HepG2 (cell line): ENCODE measurements at regions of chr18 and their contacts with region 1.

Region 1: DNA sequence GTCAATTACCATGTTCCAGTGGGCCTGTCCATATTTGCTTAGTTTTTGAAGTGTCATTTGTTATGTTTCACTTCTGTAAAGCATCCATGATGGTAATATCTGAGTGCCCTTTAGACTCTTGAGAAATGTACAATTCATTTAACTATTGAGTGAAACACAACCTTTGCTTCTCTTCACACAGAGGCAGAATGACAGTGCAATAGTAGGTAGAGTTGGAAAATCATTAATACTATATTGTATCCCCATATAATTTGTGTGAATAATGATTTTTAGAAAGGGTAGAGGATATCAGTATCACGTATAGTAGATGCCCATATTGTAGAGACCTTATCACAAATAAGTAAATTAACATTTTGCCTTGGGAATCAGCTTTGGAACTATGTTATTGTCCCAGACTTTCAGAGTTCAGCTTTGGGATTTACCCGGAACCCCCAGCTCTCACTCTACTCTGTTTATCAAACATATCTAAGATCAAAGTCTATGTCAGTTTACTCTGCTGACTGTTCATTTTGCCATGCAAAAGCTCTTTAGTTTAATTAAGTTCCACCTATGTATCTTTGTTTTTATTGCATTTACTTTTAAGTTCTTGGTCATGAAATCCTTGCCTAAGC is 172.7 kb upstream of the NOL4 start:
- DNase-seq: peak; percentile 70
- ATAC-seq: peak; percentile 96
- H3K4me3 ChIP-seq: peak overlapping the region in 1 of 3 experiments; percentile 11; a peak in 2 of 6 replicates
- H3K27ac ChIP-seq: peak overlapping the region; percentile 77
- H3K4me1 ChIP-seq: peaks cover 31% of the 10 kb centered on the region
- H3K27me3 ChIP-seq: no peaks in the 10 kb centered on the region
- CTCF ChIP-seq: no peak
- EP300 ChIP-seq: peak in 1 of 2 experiments; percentile 1; a peak in 1 of 4 replicates
- POLR2A ChIP-seq: no peak
- RAD21 ChIP-seq: no peak

Region 2: GRCh38 chr18:34444622-34445021 is 47.2 kb after region 1 on chr18:
- CTCF ChIA-PET with region 1: no interaction called
- POLR2A ChIA-PET with region 1: no interaction called
- in situ Hi-C with region 1: no loop called
- intact Hi-C with region 1: loop called (anchors 10 kb)
- DNase-seq: no peak
- ATAC-seq: no peak
- H3K4me3 ChIP-seq: no peak overlapping the region
- H3K27ac ChIP-seq: no peak overlapping the region
- H3K4me1 ChIP-seq: no peaks in the 10 kb centered on the region
- H3K27me3 ChIP-seq: no peaks in the 10 kb centered on the region
- CTCF ChIP-seq: no peak
- EP300 ChIP-seq: no peak
- POLR2A ChIP-seq: no peak
- RAD21 ChIP-seq: no peak